Mammary epithelial cell (primary cell): ENCODE measurements at regions of chrX and their contacts with region 1.

Region 1: GRCh38 chrX:45824471-45824870 is 623.8 kb upstream of the DIPK2B start:
- DNase-seq: peak; percentile 98
- H3K4me3 ChIP-seq: no peak overlapping the region
- H3K27ac ChIP-seq: peak overlapping the region; percentile 67
- H3K4me1 ChIP-seq: peaks cover 11% of the 10 kb centered on the region
- H3K27me3 ChIP-seq: no peaks in the 10 kb centered on the region
- CTCF ChIP-seq: peak; percentile 96 to 98

Region 2: DNA sequence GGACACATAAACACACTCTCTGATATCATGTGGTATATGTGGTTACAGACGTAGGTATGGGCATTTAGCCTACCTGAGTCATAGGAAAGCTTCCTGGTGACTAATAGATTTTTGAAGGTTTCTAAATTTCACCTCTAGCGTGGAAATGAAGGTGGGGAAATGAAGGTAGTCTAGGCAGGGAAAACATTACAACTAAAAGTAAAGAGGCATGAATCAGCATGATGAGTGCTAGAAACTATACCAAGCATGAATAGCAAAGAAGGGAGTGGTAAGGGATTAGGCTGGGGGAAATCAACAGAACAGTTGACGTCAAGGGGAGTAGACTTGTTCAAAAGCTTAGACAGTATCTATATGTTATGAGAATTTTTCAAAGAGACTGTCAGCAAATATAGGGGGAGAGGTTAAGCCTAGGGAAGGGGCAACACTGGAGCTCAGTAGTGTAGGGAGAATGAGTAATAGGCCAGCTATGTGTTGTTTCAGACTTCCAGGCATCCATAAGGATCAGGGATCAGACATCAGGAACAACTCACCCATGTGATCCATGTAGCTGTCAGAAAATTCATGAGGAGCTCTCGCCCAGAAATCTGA is 344.5 kb before region 1 on chrX:
- CTCF ChIA-PET with region 1: no interaction called
- dilution Hi-C with region 1: no loop called
- in situ Hi-C with region 1: no loop called
- intact Hi-C with region 1: no loop called
- DNase-seq: peak; percentile 99
- H3K4me3 ChIP-seq: no peak overlapping the region
- H3K27ac ChIP-seq: peak overlapping the region; percentile 99
- H3K4me1 ChIP-seq: peaks cover 26% of the 10 kb centered on the region
- H3K27me3 ChIP-seq: no peaks in the 10 kb centered on the region
- CTCF ChIP-seq: no peak

Region 3: GRCh38 chrX:45801554-45801953 is 22.9 kb before region 1 on chrX:
- CTCF ChIA-PET with region 1: interaction called, 3 read pairs
- dilution Hi-C with region 1: no loop called
- in situ Hi-C with region 1: no loop called
- intact Hi-C with region 1: loop called (anchors 1 kb)
- DNase-seq: peak; percentile 50
- H3K4me3 ChIP-seq: peak overlapping the region in 1 of 3 experiments; percentile 40
- H3K27ac ChIP-seq: peak overlapping the region; percentile 91
- H3K4me1 ChIP-seq: peaks cover 48% of the 10 kb centered on the region
- H3K27me3 ChIP-seq: no peaks in the 10 kb centered on the region
- CTCF ChIP-seq: peak; percentile 39 to 52

Region 4: DNA sequence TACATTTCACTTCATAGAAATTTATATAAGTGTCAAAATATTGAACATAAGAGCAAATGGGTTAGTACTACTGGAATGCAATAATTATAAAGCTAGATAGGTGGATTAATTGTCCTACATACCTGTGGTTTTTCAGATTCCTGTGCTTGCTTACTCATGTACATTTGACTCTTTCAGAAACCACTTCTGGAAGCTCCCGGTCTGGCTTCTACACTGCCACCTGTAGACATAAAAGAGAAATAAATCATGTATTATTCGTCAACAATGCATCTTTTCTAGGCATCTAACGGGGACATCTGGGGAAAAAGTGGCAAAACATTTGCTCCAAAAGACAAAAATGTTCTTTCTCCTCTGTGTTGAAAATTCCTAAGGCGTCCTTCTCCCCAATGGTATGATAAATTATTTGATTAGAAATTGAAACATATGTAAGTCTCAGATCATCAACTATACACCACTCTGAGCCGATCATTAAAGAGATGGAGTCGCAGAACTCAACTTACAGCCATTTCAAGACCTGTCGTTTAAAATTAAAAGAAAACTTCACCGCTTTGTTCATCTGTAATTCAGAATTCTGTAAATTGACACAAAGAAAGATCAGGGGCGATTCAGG is 24.9 kb after region 1 on chrX:
- CTCF ChIA-PET with region 1: interaction called, 4 read pairs
- dilution Hi-C with region 1: no loop called
- in situ Hi-C with region 1: no loop called
- intact Hi-C with region 1: loop called (anchors 1 kb)
- DNase-seq: peak; percentile 84
- H3K4me3 ChIP-seq: peak overlapping the region; percentile 34 to 78 (median 77)
- H3K27ac ChIP-seq: peak overlapping the region; percentile 56
- H3K4me1 ChIP-seq: peaks cover 32% of the 10 kb centered on the region
- H3K27me3 ChIP-seq: no peaks in the 10 kb centered on the region
- CTCF ChIP-seq: peak; percentile 36 to 61

Region 5: DNA sequence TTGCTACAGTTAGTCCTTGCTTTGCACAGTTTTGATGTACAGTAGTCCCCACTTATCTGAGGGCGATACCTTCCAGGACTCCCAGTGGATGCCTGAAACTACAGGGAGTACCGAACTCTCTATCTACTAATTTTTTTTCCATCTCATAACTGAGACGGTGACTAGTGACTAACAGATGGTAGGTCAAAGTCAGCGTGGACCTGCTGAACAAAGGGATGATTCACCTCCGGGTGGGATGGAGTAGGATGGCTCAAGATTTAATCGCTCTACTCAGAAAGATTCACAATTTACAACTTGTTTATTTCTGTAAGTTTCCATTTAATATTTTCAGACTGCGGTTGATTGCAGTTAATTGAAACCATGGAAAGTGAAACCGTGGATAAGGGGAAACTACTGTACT is 65.0 kb after region 1 on chrX:
- CTCF ChIA-PET with region 1: no interaction called
- dilution Hi-C with region 1: no loop called
- in situ Hi-C with region 1: no loop called
- intact Hi-C with region 1: no loop called
- DNase-seq: peak; percentile 17
- H3K4me3 ChIP-seq: no peak overlapping the region
- H3K27ac ChIP-seq: no peak overlapping the region
- H3K4me1 ChIP-seq: no peaks in the 10 kb centered on the region
- H3K27me3 ChIP-seq: no peaks in the 10 kb centered on the region
- CTCF ChIP-seq: no peak

Region 6: DNA sequence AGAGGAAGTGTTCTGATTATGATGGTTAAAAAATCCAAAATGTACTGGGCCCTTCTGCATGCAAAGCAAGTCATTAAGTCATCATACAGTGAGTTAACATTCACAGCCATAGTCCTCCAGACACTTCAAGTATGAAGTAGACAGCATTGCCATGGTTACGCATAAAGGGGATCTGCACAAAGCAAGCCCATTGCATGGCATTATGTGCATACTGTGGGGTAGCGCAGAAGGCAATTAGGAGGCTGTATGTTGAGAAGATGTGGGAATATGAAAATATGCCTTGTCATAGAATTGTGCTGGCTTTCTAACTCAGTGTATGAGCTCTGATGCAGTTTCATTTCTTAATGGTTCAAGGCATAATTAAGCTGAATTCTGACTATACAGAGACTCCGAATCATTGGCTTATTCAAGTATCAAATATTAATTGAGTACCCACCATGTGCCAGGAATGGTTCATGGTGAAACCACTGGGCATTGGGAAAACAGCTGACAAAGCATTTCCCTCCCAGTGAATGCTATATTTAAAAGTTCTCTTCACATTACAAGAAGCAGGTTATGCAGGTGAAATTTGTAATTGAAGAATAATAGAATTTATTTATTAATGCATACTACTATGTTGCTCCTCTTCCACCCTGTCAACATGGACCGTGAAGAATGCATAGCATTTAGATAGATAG is 131.9 kb after region 1 on chrX:
- CTCF ChIA-PET with region 1: no interaction called
- dilution Hi-C with region 1: no loop called
- in situ Hi-C with region 1: no loop called
- intact Hi-C with region 1: no loop called
- DNase-seq: no peak
- H3K4me3 ChIP-seq: no peak overlapping the region
- H3K27ac ChIP-seq: no peak overlapping the region
- H3K4me1 ChIP-seq: no peaks in the 10 kb centered on the region
- H3K27me3 ChIP-seq: no peaks in the 10 kb centered on the region
- CTCF ChIP-seq: no peak

Region 7: GRCh38 chrX:46251755-46252154 is 427.3 kb after region 1 on chrX:
- CTCF ChIA-PET with region 1: no interaction called
- dilution Hi-C with region 1: no loop called
- in situ Hi-C with region 1: loop called in 1 of 2 experiments (anchors 25 kb)
- intact Hi-C with region 1: loop called (anchors 1 kb)
- DNase-seq: peak; percentile 66
- H3K4me3 ChIP-seq: no peak overlapping the region
- H3K27ac ChIP-seq: no peak overlapping the region
- H3K4me1 ChIP-seq: peaks cover 32% of the 10 kb centered on the region
- H3K27me3 ChIP-seq: no peaks in the 10 kb centered on the region
- CTCF ChIP-seq: no peak

Region 8: DNA sequence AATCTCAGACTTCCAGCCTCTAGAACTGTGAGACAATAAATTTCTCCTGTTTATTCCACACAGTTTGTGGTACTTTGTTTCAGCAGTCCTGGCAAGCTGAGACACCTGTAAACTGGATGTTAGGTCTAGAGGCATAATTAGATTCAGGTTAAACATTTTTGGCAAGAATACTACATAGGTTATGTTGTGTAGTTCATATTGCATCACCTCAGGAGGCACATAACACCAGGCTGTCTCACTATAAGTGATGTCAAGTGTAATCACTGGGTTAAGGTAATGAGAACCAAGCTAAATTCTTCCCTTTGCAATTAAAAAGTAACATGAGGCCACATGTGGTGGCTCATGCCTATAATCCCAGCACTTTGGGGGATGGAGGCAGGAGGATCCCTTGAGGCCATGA is 506.5 kb after region 1 on chrX:
- CTCF ChIA-PET with region 1: no interaction called
- dilution Hi-C with region 1: no loop called
- in situ Hi-C with region 1: no loop called
- intact Hi-C with region 1: loop called (anchors 1 kb)
- DNase-seq: peak; percentile 76
- H3K4me3 ChIP-seq: no peak overlapping the region
- H3K27ac ChIP-seq: peak overlapping the region; percentile 2
- H3K4me1 ChIP-seq: peaks cover 38% of the 10 kb centered on the region
- H3K27me3 ChIP-seq: no peaks in the 10 kb centered on the region
- CTCF ChIP-seq: no peak

Region 9: DNA sequence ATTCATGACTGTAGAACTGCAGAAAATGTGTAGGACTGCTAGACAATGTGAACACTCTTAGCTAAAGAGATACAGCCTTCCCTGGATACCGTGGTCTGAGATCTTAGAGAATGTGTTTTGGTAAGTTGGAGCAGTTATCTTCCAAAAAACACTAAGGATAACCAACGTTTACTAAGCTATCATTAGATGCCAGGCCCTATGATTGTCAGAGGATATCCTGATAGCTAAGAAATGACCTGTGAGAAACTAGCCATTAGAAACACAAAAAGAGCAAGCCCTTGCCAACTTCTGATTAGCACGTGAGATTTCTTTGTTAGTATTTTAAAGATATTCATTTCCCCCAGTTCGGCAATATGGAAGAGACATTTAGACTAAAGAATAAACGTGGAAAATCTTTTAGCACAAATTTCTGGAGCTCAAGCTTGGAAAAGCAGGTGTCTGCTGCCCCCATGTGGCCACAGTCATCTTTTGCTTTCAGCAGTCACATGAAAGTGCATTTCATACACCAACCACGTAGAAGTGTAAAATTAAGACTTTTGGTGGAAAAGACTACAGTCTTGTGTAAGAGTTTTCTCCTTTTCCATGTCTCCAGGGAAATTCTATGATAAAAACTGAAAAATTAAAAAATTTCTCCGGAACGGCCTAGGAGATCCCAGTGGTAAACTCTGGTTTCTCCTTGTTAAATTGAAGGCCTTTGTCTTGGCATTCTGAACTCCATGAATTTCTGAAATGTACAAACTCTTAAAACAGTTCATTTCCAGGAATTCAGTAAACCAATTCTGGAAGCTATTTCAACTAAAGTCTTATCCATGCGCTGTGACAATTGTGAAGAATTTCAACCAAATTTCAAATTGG is 584.3 kb after region 1 on chrX:
- CTCF ChIA-PET with region 1: interaction called, 4 read pairs
- dilution Hi-C with region 1: no loop called
- in situ Hi-C with region 1: no loop called
- intact Hi-C with region 1: loop called (anchors 1 kb)
- DNase-seq: peak; percentile 39
- H3K4me3 ChIP-seq: no peak overlapping the region
- H3K27ac ChIP-seq: no peak overlapping the region
- H3K4me1 ChIP-seq: peaks cover 5% of the 10 kb centered on the region
- H3K27me3 ChIP-seq: no peaks in the 10 kb centered on the region
- CTCF ChIP-seq: peak; percentile 88 to 92